Activated CD4-positive, alpha-beta memory T cell treated with anti-CD3 and anti-CD28 coated beads for 36 hours (primary cell): ENCODE measurements at regions of chr3 and their contacts with region 1.

Region 1: DNA sequence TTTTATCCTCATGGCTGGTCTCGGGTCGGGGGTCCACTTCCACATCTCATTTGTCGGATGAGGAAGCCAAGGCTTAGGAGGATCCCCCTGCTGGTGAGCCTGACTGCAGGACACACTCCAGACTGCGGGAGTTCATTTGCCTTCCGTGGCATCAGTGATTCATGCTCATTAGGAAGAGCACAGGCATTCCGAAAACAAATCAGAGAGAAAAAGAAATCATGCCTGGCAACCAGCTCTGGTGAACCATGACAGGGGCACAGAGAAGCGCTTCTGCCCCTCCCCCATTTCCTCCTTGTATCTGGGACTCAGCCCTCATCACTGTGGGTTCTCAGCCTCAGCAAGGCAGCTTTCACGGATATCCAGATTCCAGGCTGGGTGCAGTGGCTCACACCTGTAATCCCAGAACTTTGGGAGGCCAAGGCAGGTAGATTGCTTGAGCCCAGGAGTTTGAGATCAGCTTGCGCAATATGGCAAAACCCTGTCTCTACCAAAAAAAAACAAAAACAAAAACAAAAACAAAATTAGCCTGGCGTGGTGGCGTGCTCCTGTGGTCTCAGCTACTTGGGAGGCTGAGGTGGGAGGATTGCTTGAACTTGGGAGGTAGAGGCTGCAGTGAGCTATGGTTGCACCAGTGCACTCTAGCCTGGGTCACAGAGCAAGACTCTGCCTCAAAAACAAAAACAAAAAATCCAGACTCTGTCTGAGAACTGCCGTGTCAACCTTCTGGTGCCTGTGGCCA is 28.4 kb downstream of the IRAK2 start:
- DNase-seq: peak; percentile 84
- H3K4me3 Mint-ChIP-seq: peak overlapping the region; percentile 35
- H3K27ac Mint-ChIP-seq: peak overlapping the region; percentile 97
- H3K4me1 Mint-ChIP-seq: peaks cover 83% of the 10 kb centered on the region
- H3K27me3 Mint-ChIP-seq: no peaks in the 10 kb centered on the region

Region 2: GRCh38 chr3:9890249-9891071 is 302.7 kb before region 1 on chr3 and contains the start of gene JAGN1:
- CTCF ChIA-PET with region 1: no interaction called
- POLR2A ChIA-PET with region 1: no interaction called
- intact Hi-C with region 1: loop called (anchors 2 kb)
- DNase-seq: peak; percentile 96
- H3K4me3 Mint-ChIP-seq: peak within 1 kb of the TSS; percentile 99
- H3K27ac Mint-ChIP-seq: peak within 1 kb of the TSS; percentile 99
- H3K4me1 Mint-ChIP-seq: peaks cover 31% of the 10 kb centered on the region
- H3K27me3 Mint-ChIP-seq: no peaks in the 10 kb centered on the region
- total RNA-seq, gene JAGN1: 25.0 to 27.8 TPM

Region 3: GRCh38 chr3:10164546-10165393 is 28.4 kb before region 1 on chr3 and contains the start of gene IRAK2:
- CTCF ChIA-PET with region 1: interaction called, 4 read pairs
- POLR2A ChIA-PET with region 1: no interaction called
- intact Hi-C with region 1: loop called (anchors 2 kb)
- DNase-seq: peak; percentile 76
- H3K4me3 Mint-ChIP-seq: peak within 1 kb of the TSS; percentile 73
- H3K27ac Mint-ChIP-seq: no peak within 1 kb of the TSS
- H3K4me1 Mint-ChIP-seq: peaks cover 17% of the 10 kb centered on the region
- H3K27me3 Mint-ChIP-seq: no peaks in the 10 kb centered on the region
- total RNA-seq, gene IRAK2: 7.3 to 8.3 TPM

Region 4: DNA sequence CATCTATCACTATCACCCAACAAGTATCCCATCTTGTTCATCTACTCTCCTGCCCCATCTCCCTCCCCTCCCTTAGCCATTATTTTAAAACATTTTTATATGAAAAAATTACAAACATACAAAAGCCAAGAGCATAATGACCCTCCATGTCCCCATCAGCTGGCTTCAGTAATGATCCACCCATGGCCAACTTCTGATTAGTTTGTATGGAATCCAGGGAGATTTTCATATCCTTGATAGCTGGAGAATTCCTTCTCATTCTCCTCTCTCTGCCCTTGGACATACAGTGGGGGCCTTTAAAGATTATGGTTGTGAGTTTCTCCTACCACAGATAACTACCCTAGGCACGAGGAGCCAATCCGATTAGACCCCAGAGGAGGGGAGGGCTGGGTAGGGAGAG is 11.8 kb after region 1 on chr3:
- CTCF ChIA-PET with region 1: interaction called, 7 read pairs
- POLR2A ChIA-PET with region 1: interaction called, 10 read pairs
- intact Hi-C with region 1: loop called (anchors 1 kb)
- DNase-seq: no peak
- H3K4me3 Mint-ChIP-seq: no peak overlapping the region
- H3K27ac Mint-ChIP-seq: no peak overlapping the region
- H3K4me1 Mint-ChIP-seq: peaks cover 31% of the 10 kb centered on the region
- H3K27me3 Mint-ChIP-seq: no peaks in the 10 kb centered on the region

Region 5: DNA sequence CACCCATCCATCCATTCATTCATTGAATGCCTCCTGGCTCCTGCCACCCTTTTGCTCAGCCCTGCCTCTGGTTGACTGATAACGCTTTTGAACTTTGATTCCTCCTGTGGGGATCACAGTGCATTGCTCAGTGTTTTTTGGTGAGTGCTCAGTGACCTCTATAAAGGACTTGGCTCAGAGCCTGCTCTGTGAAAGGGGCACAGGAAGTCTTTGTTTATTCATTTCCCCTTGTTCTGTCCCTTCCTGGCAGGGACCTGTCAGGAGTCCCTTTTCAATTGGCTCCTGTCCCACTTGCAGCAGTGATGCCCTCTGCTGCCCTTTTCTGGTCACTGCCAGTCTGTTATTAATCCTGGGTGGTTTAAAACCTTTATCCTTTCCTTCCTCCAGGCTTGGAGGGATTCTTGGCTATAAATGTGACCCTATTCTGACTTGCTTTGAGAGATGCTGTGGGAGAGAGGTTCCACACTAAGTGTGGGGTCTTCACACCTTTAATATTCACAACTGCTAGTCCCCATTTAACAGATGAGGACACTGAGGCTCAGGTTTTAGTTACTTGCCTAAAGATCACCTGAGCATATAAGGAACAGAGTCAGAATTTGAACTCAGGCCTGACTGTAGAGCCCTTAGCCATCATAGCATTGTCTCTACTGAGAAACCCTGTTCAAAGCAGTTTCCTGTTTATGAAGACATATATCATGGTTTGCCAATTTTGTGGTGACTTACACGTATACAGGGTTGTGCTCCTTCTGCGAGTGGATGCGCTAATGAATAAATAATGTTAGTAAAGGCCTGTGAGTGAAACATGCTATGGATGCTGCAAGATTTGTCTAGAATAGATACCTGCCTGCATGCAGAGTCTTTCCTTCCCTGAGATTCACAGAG is 31.9 kb after region 1 on chr3:
- CTCF ChIA-PET with region 1: interaction called, 5 read pairs
- POLR2A ChIA-PET with region 1: interaction called, 10 read pairs
- intact Hi-C with region 1: loop called (anchors 1 kb)
- DNase-seq: peak; percentile 84
- H3K4me3 Mint-ChIP-seq: peak overlapping the region; percentile 46
- H3K27ac Mint-ChIP-seq: peak overlapping the region; percentile 92
- H3K4me1 Mint-ChIP-seq: peaks cover 75% of the 10 kb centered on the region
- H3K27me3 Mint-ChIP-seq: no peaks in the 10 kb centered on the region